Activated naive CD8-positive, alpha-beta T cell treated with anti-CD3 and anti-CD28 coated beads, Interleukin-2, amount 10 ng/mL, durations not matched to agents 7 days and 5 days (primary cell): ENCODE measurements at regions of chr14 and their contacts with region 1.

Region 1: GRCh38 chr14:75333606-75334548 is 55.2 kb downstream of the FOS start:
- DNase-seq: peak; percentile 65
- ATAC-seq: peak; percentile 90
- H3K4me3 Mint-ChIP-seq: peak overlapping the region; percentile 79
- H3K27ac Mint-ChIP-seq: peak overlapping the region; percentile 91
- H3K4me1 Mint-ChIP-seq: peaks cover 26% of the 10 kb centered on the region
- H3K27me3 Mint-ChIP-seq: peaks cover 7% of the 10 kb centered on the region

Region 2: DNA sequence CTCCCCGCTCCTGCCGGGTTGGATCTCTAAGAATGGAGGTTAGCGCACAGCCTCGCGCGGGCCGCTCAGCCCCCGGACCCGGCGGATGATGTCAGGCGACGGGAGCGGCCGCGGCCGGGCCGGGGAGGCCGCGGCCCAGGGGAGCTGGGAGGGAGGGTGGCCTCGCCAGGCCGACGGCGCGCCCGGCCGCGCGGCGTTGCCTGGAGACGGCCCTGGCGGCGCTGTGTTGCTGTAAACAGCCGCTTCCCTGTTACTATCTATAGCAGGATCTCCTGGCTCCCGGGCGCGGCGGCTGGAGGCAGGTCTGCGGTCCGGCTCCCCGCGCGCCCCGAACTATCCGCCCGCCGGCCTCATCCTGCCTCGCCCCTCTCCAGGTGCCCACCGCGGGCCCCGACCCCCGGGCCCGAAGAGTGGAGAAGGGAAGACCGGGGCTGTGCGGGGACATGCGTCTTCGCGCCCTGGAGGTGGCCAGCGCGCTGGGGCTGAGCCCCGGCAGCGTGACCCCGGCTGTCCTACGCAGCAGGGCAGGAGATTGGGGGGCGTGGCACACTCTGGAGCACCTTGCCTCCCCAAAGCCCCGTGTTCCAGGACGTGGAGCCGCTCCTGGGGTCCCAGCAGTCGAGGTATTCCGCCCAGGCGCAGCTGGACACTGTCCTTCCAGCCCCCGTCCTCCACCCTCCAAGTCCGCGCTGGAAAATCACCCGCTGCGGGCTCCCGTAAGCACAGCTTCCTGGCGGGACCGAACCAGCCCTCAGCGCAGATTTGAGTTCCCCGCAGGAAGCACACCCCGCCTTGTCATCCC is 56.7 kb before region 1 on chr14:
- POLR2A ChIA-PET with region 1: no interaction called
- DNase-seq: peak; percentile 75
- ATAC-seq: peak; percentile 3
- H3K4me3 Mint-ChIP-seq: peak overlapping the region; percentile 88
- H3K27ac Mint-ChIP-seq: peak overlapping the region; percentile 76
- H3K4me1 Mint-ChIP-seq: peaks cover 31% of the 10 kb centered on the region
- H3K27me3 Mint-ChIP-seq: peaks cover 72% of the 10 kb centered on the region

Region 3: DNA sequence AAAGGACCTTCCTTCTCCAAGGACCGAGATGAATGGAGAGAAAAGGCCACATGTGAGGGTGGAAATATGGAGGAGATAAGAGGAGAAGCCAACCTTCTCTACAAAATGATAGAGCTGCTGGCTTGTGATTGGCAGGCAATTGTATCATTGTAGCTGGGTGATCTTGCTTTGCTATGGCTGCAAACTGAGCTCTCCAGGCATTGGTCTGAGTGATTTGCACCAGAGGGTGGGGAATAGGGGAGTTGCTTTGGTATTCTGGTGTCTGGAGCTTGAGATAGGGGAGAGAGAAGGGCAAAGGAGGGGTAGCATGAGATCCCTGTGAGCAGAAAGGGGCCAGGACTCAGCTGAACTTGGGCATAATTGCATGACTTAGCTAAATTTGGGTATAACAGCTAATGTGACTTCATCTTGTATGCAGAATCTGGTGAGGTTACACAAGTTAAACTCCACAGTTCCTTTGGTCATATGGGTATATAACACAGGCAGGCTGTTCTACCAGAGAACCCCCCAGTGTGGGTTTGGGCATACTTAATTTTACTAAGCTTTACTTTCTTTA is 16.7 kb after region 1 on chr14:
- POLR2A ChIA-PET with region 1: interaction called, 12 read pairs
- DNase-seq: no peak
- ATAC-seq: no peak
- H3K4me3 Mint-ChIP-seq: no peak overlapping the region
- H3K27ac Mint-ChIP-seq: no peak overlapping the region
- H3K4me1 Mint-ChIP-seq: no peaks in the 10 kb centered on the region
- H3K27me3 Mint-ChIP-seq: peaks cover 2% of the 10 kb centered on the region

Region 4: GRCh38 chr14:75389679-75390078 is 55.8 kb after region 1 on chr14:
- POLR2A ChIA-PET with region 1: no interaction called
- DNase-seq: no peak
- ATAC-seq: no peak
- H3K4me3 Mint-ChIP-seq: no peak overlapping the region
- H3K27ac Mint-ChIP-seq: no peak overlapping the region
- H3K4me1 Mint-ChIP-seq: no peaks in the 10 kb centered on the region
- H3K27me3 Mint-ChIP-seq: peaks cover 40% of the 10 kb centered on the region